ENCODE measurements at regions of chr22 and their contacts with region 1.

Region 1: DNA sequence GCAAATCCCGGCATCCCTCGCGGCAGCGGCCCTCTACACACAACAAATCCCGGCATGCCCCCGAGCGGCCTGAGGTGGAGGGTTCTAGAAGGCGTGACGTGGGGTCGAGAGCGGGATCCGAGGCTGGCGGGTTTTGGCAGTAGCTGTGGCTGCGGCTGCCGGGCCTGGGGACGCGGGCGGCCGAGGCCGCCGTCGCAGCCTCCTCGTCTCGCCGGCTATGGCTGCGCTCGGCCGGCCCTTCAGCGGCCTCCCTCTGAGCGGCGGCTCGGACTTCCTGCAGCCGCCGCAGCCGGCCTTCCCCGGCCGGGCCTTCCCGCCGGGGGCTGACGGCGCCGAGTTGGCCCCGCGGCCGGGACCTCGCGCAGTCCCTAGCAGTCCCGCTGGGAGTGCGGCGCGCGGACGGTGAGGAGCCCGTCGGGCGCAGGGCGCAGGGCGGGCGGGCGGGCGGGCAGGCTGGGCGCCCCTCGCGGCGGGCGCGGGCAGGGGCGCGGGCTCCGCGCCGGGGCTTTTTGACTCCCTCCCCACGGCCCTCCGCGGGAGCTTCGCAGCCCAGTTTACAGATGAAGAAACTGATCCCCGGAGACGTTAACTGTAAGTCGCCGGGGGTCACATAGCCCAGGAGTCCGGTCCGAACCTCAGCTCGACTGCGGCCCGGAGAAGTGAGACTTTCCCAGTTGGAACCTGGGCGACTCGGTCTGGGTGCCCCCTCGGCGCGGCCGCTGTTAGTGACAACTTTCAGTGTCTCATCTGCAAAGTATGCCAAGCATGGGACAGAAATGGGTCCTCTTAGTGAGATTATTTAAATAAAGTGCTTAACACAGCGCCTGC is at the start of gene CCDC117:
- H3K4me3 ChIP-seq: peak within 1 kb of the TSS; percentile 65
- H3K27ac ChIP-seq: peak within 1 kb of the TSS; percentile 97
- H3K4me1 ChIP-seq: no peaks in the 10 kb centered on the region
- CTCF ChIP-seq: no peak

Region 2: DNA sequence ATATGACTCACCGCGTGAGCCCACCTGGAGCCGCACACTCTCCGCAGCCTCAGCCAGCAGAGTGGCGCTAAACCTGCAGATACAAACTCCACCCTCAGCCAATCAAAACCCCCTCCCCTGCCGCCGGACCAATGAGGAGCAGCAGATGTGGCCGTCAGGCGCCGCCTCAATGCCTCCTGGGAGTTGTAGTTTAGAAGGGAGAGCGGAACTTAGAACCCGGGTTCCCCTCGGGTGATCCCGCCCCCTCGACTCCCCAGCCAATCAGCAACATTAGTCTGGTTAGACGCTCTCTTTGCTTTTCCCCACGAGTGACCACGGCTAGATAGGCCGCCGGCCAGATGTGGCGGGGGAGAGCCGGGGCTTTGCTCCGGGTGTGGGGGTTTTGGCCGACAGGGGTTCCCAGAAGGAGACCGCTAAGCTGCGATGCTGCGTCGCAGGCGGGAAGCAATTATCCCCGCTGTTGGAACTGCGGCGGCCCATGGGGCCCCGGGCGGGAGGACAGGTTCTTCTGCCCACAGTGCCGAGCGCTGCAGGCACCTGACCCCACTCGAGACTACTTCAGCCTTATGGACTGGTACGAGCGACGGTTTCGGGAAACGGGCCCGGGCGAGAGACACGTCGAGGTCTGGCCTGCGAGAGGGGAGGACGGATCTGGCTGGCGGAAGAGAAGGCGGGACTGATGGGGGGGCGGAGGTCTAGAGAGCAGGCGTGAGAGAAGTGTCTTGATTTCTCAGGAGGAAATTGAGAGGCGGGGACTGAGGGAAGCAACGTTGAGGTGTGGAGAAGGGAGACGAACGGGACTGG is 30.9 kb before region 1 on chr22 and contains the starts of genes CHEK2 and HSCB:
- CTCF ChIA-PET with region 1: no interaction called
- POLR2A ChIA-PET with region 1: interaction called, 13 read pairs
- H3K4me3 ChIP-seq: peak within 1 kb of the TSS; percentile 72
- H3K27ac ChIP-seq: peak within 1 kb of the TSS; percentile 94
- H3K4me1 ChIP-seq: no peaks in the 10 kb centered on the region
- CTCF ChIP-seq: peak; percentile 90

Region 3: DNA sequence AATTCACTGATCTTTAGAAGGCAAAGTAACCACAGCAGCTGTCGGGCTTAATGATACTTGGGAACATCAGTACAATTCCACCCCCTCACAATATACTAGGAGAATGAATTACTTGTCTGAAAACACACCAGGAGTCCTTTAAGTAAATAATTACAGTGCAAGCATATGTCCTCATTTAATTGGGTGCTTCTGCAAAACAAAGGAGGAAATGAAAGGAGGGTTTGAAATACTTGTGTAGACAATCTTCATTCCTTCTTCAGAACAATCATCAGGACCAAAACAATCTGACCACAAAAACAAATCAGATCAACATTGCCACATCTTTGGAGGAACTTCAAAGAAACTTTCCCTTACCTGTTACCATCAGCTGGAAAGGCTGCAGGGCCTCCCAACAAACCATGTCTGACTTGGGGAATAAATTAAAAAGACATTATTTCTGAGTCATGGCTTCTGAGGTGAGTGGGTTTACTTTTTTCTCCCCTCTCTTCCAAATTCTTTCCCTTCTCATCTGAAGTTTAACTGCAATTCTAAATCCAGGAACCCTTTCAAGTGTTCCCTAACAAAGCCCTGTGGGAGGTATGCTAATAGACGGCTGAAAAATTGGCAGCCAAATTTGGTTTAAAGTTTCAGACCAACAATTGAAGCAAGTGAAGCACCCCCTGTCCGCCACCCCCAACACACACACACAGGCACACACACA is 12.8 kb before region 1 on chr22:
- CTCF ChIA-PET with region 1: interaction called, 3 read pairs
- POLR2A ChIA-PET with region 1: interaction called, 10 read pairs
- H3K4me3 ChIP-seq: no peak overlapping the region
- H3K27ac ChIP-seq: no peak overlapping the region; the same call in 1 of the 2 replicates
- H3K4me1 ChIP-seq: peaks cover 10% of the 10 kb centered on the region
- CTCF ChIP-seq: no peak

Region 4: DNA sequence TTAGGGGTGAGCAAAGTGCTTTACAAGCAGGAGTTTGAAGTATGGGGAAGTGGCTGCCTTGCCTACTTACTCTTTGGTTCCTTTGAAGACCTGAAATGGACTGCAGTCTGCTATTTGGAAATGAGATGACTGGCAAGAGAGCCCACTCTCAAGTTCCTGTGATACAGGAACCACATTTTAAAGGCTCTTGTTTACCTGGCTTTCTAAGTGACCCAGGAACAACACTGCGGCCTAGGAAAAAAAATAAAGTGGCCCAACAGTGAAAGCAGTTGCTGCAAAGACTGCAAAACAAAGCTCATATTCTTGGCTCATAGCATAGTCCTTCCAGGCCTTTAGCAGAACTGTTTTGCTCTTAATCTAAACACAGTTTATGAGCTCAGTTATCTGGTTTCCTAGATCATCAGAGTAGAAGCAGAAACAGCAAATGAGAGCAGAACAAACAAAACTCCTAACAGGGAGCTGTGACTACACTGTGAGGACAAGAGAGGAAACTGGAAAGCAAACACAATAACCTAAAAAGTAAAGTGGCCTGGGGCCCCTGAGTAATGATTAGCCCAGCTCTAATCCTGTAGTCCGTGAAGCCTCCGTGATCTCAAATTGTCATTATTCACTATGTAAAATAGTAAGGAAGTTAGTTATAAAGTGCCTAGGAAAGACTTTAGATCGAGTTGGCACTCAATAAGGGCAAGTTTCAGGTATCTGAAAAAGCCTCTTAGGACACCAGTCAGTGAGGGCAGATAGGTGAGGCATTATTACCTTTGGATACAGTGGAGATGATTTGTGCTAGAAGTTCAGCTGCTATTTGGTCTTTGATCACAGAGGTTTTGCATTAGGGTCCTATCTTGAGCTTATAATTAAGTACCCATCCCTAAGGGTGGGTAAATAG is 11.2 kb after region 1 on chr22:
- CTCF ChIA-PET with region 1: interaction called, 8 read pairs
- POLR2A ChIA-PET with region 1: interaction called, 20 read pairs
- H3K4me3 ChIP-seq: no peak overlapping the region
- H3K27ac ChIP-seq: peak overlapping the region; percentile 77
- H3K4me1 ChIP-seq: peaks cover 11% of the 10 kb centered on the region
- CTCF ChIP-seq: no peak

Region 5: DNA sequence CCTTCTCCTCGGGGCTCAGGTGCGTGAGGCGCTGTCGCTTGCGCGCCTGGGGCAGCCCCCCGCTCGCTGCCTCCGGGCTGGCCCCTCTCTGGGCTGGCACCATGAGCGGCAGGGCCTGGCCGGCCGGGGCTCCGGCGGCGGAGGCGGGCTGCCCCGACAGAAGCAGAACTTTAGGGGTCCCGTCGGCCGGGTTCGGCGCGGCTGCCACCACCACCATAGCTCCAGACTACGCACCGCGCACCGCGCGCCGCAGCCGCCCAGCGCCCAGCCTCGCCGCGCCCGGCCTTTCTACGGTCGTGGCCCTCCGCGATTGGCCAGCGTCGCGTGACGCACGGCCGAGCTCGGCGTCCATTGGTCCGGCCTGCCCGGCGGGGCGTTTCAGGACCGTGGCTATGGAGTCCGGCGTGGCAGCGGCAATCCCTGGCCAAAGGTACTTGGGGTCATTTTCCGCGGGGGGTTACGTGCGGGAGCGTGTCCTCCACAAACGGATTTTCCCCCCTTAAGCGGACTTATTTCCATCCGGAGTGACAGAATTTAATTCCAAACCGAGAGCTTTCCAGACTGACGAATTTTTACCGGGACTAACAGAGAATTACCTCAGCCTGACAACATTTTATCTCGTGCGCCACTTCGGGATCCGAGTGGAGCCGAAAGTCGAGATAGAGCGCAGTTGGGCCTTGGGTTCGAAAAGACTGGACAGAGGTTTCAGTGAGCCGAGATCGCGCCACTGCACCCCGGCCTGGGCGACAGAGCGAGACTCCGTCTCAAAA is 27.6 kb after region 1 on chr22 and contains the start of gene XBP1:
- CTCF ChIA-PET with region 1: no interaction called
- POLR2A ChIA-PET with region 1: interaction called, 25 read pairs
- H3K4me3 ChIP-seq: peak within 1 kb of the TSS; percentile 86
- H3K27ac ChIP-seq: peak within 1 kb of the TSS; percentile 86
- H3K4me1 ChIP-seq: no peaks in the 10 kb centered on the region
- CTCF ChIP-seq: peak; percentile 4; the same call in 1 of the 2 replicates